Spleen (tissue), 13 donors: ENCODE measurements at regions of chr18 and their contacts with region 1.

Region 1: DNA sequence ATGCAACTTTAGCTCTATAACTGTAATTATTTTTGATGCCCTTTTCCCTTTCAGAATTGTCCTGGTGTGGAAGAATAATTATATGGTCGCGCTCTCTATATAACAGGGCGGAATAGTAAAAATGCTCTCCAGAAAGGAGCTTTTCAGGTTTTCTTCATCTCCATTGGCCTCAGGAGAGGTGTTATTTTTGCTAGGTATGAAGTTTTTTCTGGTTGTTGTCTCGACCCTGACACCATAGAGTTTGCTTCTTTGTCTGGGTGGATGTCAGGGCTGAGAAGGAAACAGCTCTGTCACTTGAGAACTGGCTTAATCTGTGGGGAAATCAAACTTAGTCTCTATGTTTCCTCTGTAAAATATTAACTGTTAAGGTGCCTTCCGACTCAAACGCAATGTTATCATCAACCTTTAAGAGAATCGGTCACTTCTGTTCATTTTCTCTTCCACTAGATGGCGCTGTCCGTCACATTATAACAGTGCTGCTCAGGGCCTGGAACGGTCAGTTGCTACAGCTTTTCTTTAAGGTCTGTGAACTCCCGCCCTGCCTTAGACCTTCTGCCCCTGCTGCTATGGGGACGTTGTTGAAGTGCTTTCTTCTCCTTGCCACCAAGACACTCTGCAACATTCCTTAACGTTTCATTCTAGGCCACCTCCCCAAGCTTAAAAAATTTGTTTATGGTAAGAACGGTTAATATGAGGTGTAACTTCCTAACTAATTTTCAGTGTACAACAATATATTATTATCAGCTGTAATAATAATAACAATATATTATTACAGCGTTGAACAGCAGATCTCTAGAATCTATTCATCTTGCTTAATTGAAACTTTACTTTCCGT is 23.8 kb upstream of the SERPINB12 start:
- DNase-seq: no peak
- H3K4me3 ChIP-seq: no peak overlapping the region
- H3K27ac ChIP-seq: no peak overlapping the region
- H3K4me1 ChIP-seq: peaks cover 0 to 7% (median 2%) of the 10 kb centered on the region in 6 donors
- H3K27me3 ChIP-seq: peaks cover 0 to 6% (median 0%) of the 10 kb centered on the region in 7 donors
- CTCF ChIP-seq: peak in 10 of 11 experiments; percentile 34 to 76 (median 71)
- POLR2A ChIP-seq: no peak

Region 2: GRCh38 chr18:63378919-63379638 is 139.3 kb before region 1 on chr18:
- intact Hi-C with region 1: no loop called
- DNase-seq: no peak
- H3K4me3 ChIP-seq: no peak overlapping the region
- H3K27ac ChIP-seq: no peak overlapping the region
- H3K4me1 ChIP-seq: peaks cover 0 to 13% (median 1%) of the 10 kb centered on the region in 6 donors
- H3K27me3 ChIP-seq: no peaks in the 10 kb centered on the region
- CTCF ChIP-seq: no peak
- POLR2A ChIP-seq: no peak

Region 3: GRCh38 chr18:63848159-63848558 is 329.8 kb after region 1 on chr18:
- intact Hi-C with region 1: loop called (anchors 10 kb)
- DNase-seq: no peak
- H3K4me3 ChIP-seq: no peak overlapping the region
- H3K27ac ChIP-seq: no peak overlapping the region
- H3K4me1 ChIP-seq: no peaks in the 10 kb centered on the region
- H3K27me3 ChIP-seq: peaks cover 0 to 13% (median 0%) of the 10 kb centered on the region in 7 donors
- CTCF ChIP-seq: peak in 6 of 11 experiments; percentile 16 to 48 (median 26)
- POLR2A ChIP-seq: no peak